ENCODE measurements at regions of chr14 and their contacts with region 1.

Region 1: GRCh38 chr14:74893614-74894091 is 11.9 kb downstream of the DLST start:
- DNase-seq: no peak
- H3K4me3 Mint-ChIP-seq: no peak overlapping the region
- H3K27ac Mint-ChIP-seq: peak overlapping the region; percentile 28
- H3K4me1 Mint-ChIP-seq: peaks cover 9% of the 10 kb centered on the region
- H3K27me3 Mint-ChIP-seq: no peaks in the 10 kb centered on the region

Region 2: DNA sequence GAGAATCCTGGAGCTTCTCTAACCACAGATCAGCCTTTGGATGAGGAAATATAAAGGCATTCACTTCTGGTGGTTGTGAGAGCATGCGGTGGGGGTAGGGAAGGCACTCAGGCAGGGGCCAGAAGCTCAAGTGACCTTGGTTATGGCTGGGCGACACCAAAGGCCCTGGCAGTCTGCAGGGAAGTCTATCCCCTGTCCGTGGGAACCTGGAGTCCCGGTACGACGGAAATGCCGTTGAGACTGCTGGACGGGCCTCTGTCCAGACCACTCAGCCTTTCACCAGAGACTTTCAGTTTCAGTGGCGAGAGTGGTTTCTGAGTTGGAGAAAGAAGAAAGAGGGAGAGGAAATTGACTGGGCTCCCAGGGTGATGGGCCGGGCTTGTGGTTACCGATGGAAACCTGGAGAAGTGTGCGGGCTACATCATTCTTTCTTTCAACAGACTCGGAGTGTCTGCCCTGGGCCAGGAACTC is 379.1 kb before region 1 on chr14:
- CTCF ChIA-PET with region 1: no interaction called
- POLR2A ChIA-PET with region 1: no interaction called
- DNase-seq: no peak
- H3K4me3 Mint-ChIP-seq: no peak overlapping the region
- H3K27ac Mint-ChIP-seq: no peak overlapping the region
- H3K4me1 Mint-ChIP-seq: peaks cover 8% of the 10 kb centered on the region
- H3K27me3 Mint-ChIP-seq: peaks cover 25% of the 10 kb centered on the region

Region 3: GRCh38 chr14:74881431-74882361 is 12.0 kb before region 1 on chr14 and contains the start of gene DLST:
- CTCF ChIA-PET with region 1: interaction called, 19 read pairs
- POLR2A ChIA-PET with region 1: interaction called, 3 read pairs
- DNase-seq: peak; percentile 85
- H3K4me3 Mint-ChIP-seq: peak within 1 kb of the TSS; percentile 100
- H3K27ac Mint-ChIP-seq: peak within 1 kb of the TSS; percentile 98
- H3K4me1 Mint-ChIP-seq: peaks cover 58% of the 10 kb centered on the region
- H3K27me3 Mint-ChIP-seq: no peaks in the 10 kb centered on the region
- total RNA-seq, gene DLST: 92.6 to 106 TPM

Region 4: GRCh38 chr14:74905375-74906142 is 11.9 kb after region 1 on chr14:
- CTCF ChIA-PET with region 1: interaction called, 29 read pairs
- POLR2A ChIA-PET with region 1: no interaction called
- DNase-seq: peak; percentile 81
- H3K4me3 Mint-ChIP-seq: no peak overlapping the region
- H3K27ac Mint-ChIP-seq: peak overlapping the region; percentile 60
- H3K4me1 Mint-ChIP-seq: peaks cover 9% of the 10 kb centered on the region
- H3K27me3 Mint-ChIP-seq: no peaks in the 10 kb centered on the region

Region 5: DNA sequence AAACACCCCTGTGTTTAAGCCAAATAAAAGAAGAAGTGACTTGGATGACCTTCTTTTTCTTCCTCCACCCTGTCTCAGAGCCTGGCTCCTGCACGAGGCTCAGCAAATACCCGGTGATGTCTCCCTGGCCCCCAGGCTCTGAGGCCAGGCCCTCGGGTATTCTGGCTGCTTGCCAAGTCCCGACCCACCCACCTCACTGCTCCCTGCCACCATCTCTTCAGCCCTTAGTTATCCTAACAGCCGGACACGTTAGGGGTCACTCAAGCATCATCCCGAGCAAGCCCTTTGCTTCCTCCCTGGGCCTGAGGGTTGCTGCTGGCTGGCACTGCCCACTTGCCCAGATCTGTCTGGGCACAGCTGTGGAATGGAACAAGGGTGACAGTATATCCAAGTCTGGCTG is 22.2 kb after region 1 on chr14:
- CTCF ChIA-PET with region 1: no interaction called
- POLR2A ChIA-PET with region 1: no interaction called
- DNase-seq: no peak
- H3K4me3 Mint-ChIP-seq: no peak overlapping the region
- H3K27ac Mint-ChIP-seq: no peak overlapping the region
- H3K4me1 Mint-ChIP-seq: no peaks in the 10 kb centered on the region
- H3K27me3 Mint-ChIP-seq: no peaks in the 10 kb centered on the region